Endothelial cell of umbilical vein (primary cell): ENCODE measurements at regions of chr9 and their contacts with region 1.

Region 1: GRCh38 chr9:34546834-34547827 is 24.3 kb upstream of the ENHO start:
- DNase-seq: peak; percentile 66
- H3K4me3 ChIP-seq: no peak overlapping the region
- H3K27ac ChIP-seq: no peak overlapping the region
- H3K4me1 ChIP-seq: no peaks in the 10 kb centered on the region
- H3K27me3 ChIP-seq: peaks cover 5 to 7% of the 10 kb centered on the region in 2 experiments
- CTCF ChIP-seq: peak; percentile 73 to 85
- POLR2A ChIP-seq: no peak

Region 2: DNA sequence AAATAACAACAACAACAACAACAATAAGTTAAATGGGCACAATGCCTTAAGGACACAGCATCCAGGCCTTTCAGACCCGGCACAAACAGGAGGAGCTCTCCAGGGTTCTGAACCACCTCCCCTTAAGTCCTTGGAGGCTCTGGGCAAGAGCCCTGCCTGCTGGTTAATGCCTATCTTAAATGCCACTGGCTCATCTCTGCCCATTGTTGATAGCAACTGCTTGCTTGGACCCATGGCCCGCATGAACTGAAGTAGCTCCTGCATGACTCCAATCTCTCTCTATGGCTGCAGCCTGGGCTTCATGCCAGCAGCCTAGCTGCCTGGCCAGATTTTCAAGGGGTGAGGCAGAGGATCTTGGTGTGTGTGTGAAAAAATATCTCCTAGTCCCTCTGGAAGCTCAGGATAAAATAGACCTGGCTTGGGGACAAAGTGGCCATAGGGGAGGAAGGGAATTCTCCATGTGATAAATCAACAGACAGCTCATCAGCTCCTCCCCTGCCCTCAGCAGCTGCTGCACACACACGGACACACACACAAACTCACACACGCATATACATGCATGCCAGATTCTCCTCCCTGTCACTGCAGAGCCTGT is 116.2 kb before region 1 on chr9:
- CTCF ChIA-PET with region 1: interaction called, 13 read pairs
- POLR2A ChIA-PET with region 1: no interaction called
- dilution Hi-C with region 1: no loop called
- intact Hi-C with region 1: no loop called
- DNase-seq: peak; percentile 64
- H3K4me3 ChIP-seq: no peak overlapping the region
- H3K27ac ChIP-seq: no peak overlapping the region
- H3K4me1 ChIP-seq: peaks cover 15% of the 10 kb centered on the region
- H3K27me3 ChIP-seq: no peaks in the 10 kb centered on the region
- CTCF ChIP-seq: no peak
- POLR2A ChIP-seq: no peak

Region 3: GRCh38 chr9:34479431-34479866 is 67.7 kb before region 1 on chr9:
- CTCF ChIA-PET with region 1: no interaction called
- POLR2A ChIA-PET with region 1: no interaction called
- dilution Hi-C with region 1: no loop called
- intact Hi-C with region 1: no loop called
- DNase-seq: no peak
- H3K4me3 ChIP-seq: no peak overlapping the region
- H3K27ac ChIP-seq: no peak overlapping the region
- H3K4me1 ChIP-seq: no peaks in the 10 kb centered on the region
- H3K27me3 ChIP-seq: peaks cover 15 to 24% of the 10 kb centered on the region in 2 experiments
- CTCF ChIP-seq: no peak
- POLR2A ChIP-seq: no peak

Region 4: GRCh38 chr9:34500623-34501267 is 46.4 kb before region 1 on chr9:
- CTCF ChIA-PET with region 1: interaction called, 14 read pairs
- POLR2A ChIA-PET with region 1: no interaction called
- dilution Hi-C with region 1: no loop called
- intact Hi-C with region 1: loop called (anchors 2 kb)
- DNase-seq: peak; percentile 46
- H3K4me3 ChIP-seq: no peak overlapping the region
- H3K27ac ChIP-seq: no peak overlapping the region
- H3K4me1 ChIP-seq: peaks cover 13% of the 10 kb centered on the region
- H3K27me3 ChIP-seq: peaks cover 10 to 17% of the 10 kb centered on the region in 2 experiments
- CTCF ChIP-seq: peak; percentile 85 to 93
- POLR2A ChIP-seq: no peak

Region 5: DNA sequence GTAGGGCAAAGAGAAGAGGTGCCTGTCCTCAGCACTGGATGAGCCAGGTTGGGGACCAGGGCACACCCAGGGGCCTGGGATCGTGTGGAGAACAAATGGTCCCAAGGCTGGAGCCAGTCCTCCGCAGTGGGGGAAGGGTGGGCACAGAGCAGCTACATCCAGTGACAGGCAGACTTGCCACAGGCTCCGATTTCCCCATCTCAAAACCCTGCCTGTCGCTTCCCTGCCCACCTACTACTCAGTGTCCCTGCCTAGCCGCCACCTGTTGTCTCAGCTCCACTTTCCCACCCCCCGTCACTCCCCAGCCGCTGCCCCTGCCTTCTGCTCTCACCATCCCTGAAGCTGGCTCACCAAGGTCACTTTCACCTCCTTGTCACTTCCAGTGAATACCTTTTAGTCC is 10.4 kb before region 1 on chr9:
- CTCF ChIA-PET with region 1: interaction called, 10 read pairs
- POLR2A ChIA-PET with region 1: no interaction called
- dilution Hi-C with region 1: no loop called
- intact Hi-C with region 1: no loop called
- DNase-seq: no peak
- H3K4me3 ChIP-seq: no peak overlapping the region
- H3K27ac ChIP-seq: no peak overlapping the region
- H3K4me1 ChIP-seq: no peaks in the 10 kb centered on the region
- H3K27me3 ChIP-seq: peaks cover 15 to 20% of the 10 kb centered on the region in 2 experiments
- CTCF ChIP-seq: no peak
- POLR2A ChIP-seq: no peak

Region 6: GRCh38 chr9:34578241-34579103 is 31.3 kb after region 1 on chr9:
- CTCF ChIA-PET with region 1: interaction called, 13 read pairs
- POLR2A ChIA-PET with region 1: no interaction called
- dilution Hi-C with region 1: no loop called
- intact Hi-C with region 1: no loop called
- DNase-seq: peak; percentile 28
- H3K4me3 ChIP-seq: no peak overlapping the region
- H3K27ac ChIP-seq: no peak overlapping the region
- H3K4me1 ChIP-seq: no peaks in the 10 kb centered on the region
- H3K27me3 ChIP-seq: peaks cover 59 to 61% of the 10 kb centered on the region in 2 experiments
- CTCF ChIP-seq: no peak
- POLR2A ChIP-seq: no peak

Region 7: GRCh38 chr9:34603610-34604231 is 56.6 kb after region 1 on chr9:
- CTCF ChIA-PET with region 1: interaction called, 94 read pairs
- POLR2A ChIA-PET with region 1: no interaction called
- dilution Hi-C with region 1: no loop called
- intact Hi-C with region 1: loop called (anchors 1 kb)
- DNase-seq: peak; percentile 77
- H3K4me3 ChIP-seq: no peak overlapping the region
- H3K27ac ChIP-seq: no peak overlapping the region
- H3K4me1 ChIP-seq: no peaks in the 10 kb centered on the region
- H3K27me3 ChIP-seq: peaks cover 0 to 10% of the 10 kb centered on the region in 2 experiments
- CTCF ChIP-seq: peak; percentile 85 to 89
- POLR2A ChIP-seq: no peak

Region 8: GRCh38 chr9:34783951-34784487 is 236.9 kb after region 1 on chr9:
- CTCF ChIA-PET with region 1: no interaction called
- POLR2A ChIA-PET with region 1: no interaction called
- dilution Hi-C with region 1: no loop called
- intact Hi-C with region 1: no loop called
- DNase-seq: no peak
- H3K4me3 ChIP-seq: no peak overlapping the region
- H3K27ac ChIP-seq: no peak overlapping the region
- H3K4me1 ChIP-seq: no peaks in the 10 kb centered on the region
- H3K27me3 ChIP-seq: peaks cover 20 to 40% of the 10 kb centered on the region in 2 experiments
- CTCF ChIP-seq: no peak
- POLR2A ChIP-seq: no peak